HCT116 (cell line): ENCODE measurements at regions of chr19 and their contacts with region 1.

Region 1: DNA sequence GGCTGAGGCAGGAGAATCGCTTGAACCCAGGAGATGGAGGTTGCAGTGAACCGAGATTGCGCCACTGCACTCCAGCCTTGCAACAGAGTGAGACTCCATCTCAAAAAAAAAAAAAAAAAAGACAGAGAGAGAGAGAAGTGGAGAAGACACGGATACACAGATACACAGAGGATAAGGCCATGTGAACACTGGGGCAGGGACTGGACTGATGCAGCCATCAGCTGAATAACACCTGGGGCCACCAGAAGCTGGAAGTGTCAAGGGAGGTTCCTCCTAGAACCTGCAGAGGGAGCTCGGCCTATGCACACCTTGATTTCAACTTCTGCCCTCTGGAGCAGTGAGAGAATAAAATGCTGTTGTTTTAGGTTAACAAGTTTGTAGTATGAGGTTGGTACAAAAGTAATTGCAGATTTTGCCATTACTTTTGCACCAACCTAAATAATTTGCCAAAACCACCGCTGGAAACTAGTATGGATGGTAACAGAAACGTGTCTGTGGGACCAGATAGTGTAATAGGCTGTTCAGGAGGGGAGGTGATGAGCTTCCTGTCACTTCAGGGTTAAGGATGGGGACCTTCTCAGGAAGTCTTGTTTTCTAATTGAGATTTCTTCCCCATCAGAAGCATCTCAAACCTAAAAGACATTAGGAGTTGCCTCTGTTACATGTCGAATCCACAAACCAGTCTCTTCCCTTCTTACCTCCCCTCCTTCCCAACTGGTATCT is 36.4 kb upstream of the IGSF23 start:
- DNase-seq: peak; percentile 39
- ATAC-seq: peak; percentile 97
- H3K4me3 ChIP-seq: no peak overlapping the region
- H3K27ac ChIP-seq: no peak overlapping the region
- H3K4me1 ChIP-seq: peaks cover 0 to 3% of the 10 kb centered on the region in 2 experiments; a peak in 1 of 4 replicates
- H3K27me3 ChIP-seq: no peaks in the 10 kb centered on the region
- CTCF ChIP-seq: peak; percentile 84 to 91 (median 85)
- POLR2A ChIP-seq: no peak
- RAD21 ChIP-seq: peak; percentile 89

Region 2: GRCh38 chr19:44587963-44588770 is 11.2 kb after region 1 on chr19:
- CTCF ChIA-PET with region 1: interaction called, 18 read pairs
- POLR2A ChIA-PET with region 1: interaction called, 8 read pairs
- RAD21 ChIA-PET with region 1: no interaction called
- intact Hi-C with region 1: no loop called
- DNase-seq: peak; percentile 78
- ATAC-seq: peak; percentile 89
- H3K4me3 ChIP-seq: peak overlapping the region; percentile 37 to 50
- H3K27ac ChIP-seq: peak overlapping the region; percentile 66
- H3K4me1 ChIP-seq: peaks cover 18 to 51% of the 10 kb centered on the region in 2 experiments
- H3K27me3 ChIP-seq: no peaks in the 10 kb centered on the region
- CTCF ChIP-seq: peak in 2 of 3 experiments; percentile 27 to 35; a peak in 1 of 6 replicates
- POLR2A ChIP-seq: no peak
- RAD21 ChIP-seq: peak; percentile 62

Region 3: DNA sequence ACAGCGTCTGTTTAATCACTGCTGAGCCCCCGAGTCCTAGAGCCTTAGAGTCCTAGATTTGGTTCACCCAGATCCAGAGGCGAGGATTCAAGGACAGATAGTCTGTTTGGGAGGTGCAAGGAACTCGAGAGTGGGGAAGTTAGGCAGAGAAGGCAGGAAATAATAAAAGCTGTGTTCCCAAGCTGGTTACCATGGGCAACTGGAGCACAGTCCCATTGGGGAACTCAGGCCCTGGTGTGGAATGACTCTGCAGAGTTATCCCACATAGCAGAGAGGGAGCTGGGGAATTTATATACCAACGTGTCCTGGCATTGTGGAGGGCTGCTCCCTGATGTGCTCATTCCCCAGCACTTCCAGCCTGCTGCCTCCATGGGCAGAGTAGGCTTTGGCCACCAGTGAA is 46.1 kb after region 1 on chr19:
- CTCF ChIA-PET with region 1: no interaction called
- POLR2A ChIA-PET with region 1: no interaction called
- RAD21 ChIA-PET with region 1: no interaction called
- intact Hi-C with region 1: no loop called
- DNase-seq: no peak
- ATAC-seq: no peak
- H3K4me3 ChIP-seq: no peak overlapping the region
- H3K27ac ChIP-seq: no peak overlapping the region
- H3K4me1 ChIP-seq: peaks cover 13 to 29% of the 10 kb centered on the region in 2 experiments
- H3K27me3 ChIP-seq: no peaks in the 10 kb centered on the region
- CTCF ChIP-seq: no peak
- POLR2A ChIP-seq: no peak
- RAD21 ChIP-seq: no peak

Region 4: DNA sequence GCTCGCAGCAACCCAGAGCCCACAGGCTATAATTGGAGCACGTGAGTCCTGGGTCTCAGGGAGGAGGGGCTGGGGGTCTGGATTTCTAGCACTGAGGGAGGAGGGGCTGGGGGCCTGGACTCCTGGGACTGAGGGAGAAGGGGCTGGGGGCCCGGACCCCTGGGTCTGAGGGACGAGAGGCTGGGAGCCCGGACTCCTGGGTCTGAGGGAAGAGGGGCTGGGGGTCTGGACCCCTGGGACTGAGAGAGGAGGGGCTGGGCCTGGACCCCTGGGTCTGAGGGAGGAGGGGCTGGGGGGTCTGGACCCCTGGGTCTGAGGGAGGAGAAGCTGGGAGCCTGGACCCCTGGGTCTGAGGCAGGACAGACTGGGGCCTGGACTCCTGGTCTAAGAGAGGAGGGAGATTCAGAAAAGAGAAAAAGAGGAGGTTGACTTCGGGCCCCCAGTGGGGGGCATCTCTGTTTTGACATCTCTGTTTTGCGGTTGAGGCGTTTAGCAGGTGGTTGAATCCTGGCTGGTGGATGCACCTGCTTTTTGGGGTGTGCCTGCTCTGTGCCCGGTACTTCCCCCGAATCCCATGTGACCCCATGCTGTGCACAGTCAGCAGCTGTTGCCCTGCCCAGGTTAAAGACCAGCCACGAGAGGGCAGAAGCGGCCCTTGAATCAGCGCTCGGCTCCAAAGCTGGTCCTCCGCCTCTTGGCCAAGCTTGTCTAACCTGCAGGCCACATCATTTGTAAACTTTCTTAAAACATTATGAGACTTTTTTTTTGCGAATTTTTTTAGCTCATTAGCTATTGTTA is 77.2 kb after region 1 on chr19:
- CTCF ChIA-PET with region 1: interaction called, 15 read pairs
- POLR2A ChIA-PET with region 1: interaction called, 3 read pairs
- RAD21 ChIA-PET with region 1: interaction called, 5 read pairs
- intact Hi-C with region 1: loop called (anchors 1 kb)
- DNase-seq: no peak
- ATAC-seq: peak; percentile 67
- H3K4me3 ChIP-seq: no peak overlapping the region
- H3K27ac ChIP-seq: no peak overlapping the region
- H3K4me1 ChIP-seq: no peaks in the 10 kb centered on the region
- H3K27me3 ChIP-seq: no peaks in the 10 kb centered on the region
- CTCF ChIP-seq: peak; percentile 22 to 59 (median 43); a peak in 5 of 6 replicates
- POLR2A ChIP-seq: no peak
- RAD21 ChIP-seq: peak; percentile 55

Region 5: GRCh38 chr19:45001087-45001739 is 424.2 kb after region 1 on chr19 and contains the start of gene RELB:
- CTCF ChIA-PET with region 1: no interaction called
- POLR2A ChIA-PET with region 1: no interaction called
- RAD21 ChIA-PET with region 1: no interaction called
- intact Hi-C with region 1: no loop called
- DNase-seq: peak; percentile 72
- ATAC-seq: peak; percentile 75
- H3K4me3 ChIP-seq: peak within 1 kb of the TSS; percentile 67 to 71
- H3K27ac ChIP-seq: peak within 1 kb of the TSS; percentile 76
- H3K4me1 ChIP-seq: peaks cover 12 to 16% of the 10 kb centered on the region in 2 experiments; a peak in 3 of 4 replicates
- H3K27me3 ChIP-seq: no peaks in the 10 kb centered on the region
- CTCF ChIP-seq: no peak
- POLR2A ChIP-seq: no peak
- RAD21 ChIP-seq: no peak
- total RNA-seq, gene RELB: 12.9 TPM